WTC11 (cell line): ENCODE measurements at regions of chr6 and their contacts with region 1.

Region 1: DNA sequence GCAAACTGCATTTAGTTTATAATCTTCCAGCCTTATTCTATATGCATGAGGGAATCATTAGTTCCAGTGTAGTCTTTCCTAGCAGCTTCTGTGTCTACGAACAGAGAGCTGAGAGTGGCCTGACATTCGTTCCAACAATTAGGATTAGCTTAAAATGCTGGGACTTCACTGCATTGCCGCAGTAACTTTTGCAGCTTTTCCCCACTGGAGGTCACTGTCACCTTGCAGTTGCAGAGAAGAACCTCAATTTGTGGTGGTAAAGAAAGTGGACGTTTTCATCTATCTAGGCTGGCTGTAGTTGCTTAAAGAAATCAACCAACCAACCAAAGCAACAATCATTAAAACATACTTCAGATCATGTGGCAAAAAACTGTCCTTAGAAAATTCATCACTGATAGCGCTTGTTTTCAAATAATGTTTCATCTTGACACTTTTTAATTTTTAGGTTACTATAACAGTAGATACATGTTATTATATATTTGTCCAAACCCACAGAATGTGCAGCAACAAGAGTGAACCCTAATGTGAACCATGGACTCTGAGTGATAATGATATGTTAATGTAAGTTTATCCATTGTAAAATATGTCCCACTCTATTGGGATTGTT is 12.2 kb downstream of the MYLK4 start:
- DNase-seq: peak; percentile 66
- ATAC-seq: peak; percentile 55
- H3K4me3 Mint-ChIP-seq: no peak overlapping the region
- H3K27ac Mint-ChIP-seq: no peak overlapping the region
- H3K4me1 Mint-ChIP-seq: peaks cover 35% of the 10 kb centered on the region
- H3K27me3 Mint-ChIP-seq: no peaks in the 10 kb centered on the region
- CTCF ChIP-seq: peak; percentile 22; the same call in 1 of the 2 replicates

Region 2: GRCh38 chr6:2622671-2623070 is 115.8 kb before region 1 on chr6:
- CTCF ChIA-PET with region 1: no interaction called
- POLR2A ChIA-PET with region 1: no interaction called
- DNase-seq: no peak
- ATAC-seq: no peak
- H3K4me3 Mint-ChIP-seq: no peak overlapping the region
- H3K27ac Mint-ChIP-seq: no peak overlapping the region
- H3K4me1 Mint-ChIP-seq: no peaks in the 10 kb centered on the region
- H3K27me3 Mint-ChIP-seq: no peaks in the 10 kb centered on the region
- CTCF ChIP-seq: no peak

Region 3: GRCh38 chr6:2725999-2726567 is 12.4 kb before region 1 on chr6:
- CTCF ChIA-PET with region 1: interaction called, 17 read pairs
- POLR2A ChIA-PET with region 1: no interaction called
- DNase-seq: no peak
- ATAC-seq: peak; percentile 41; the same call in 1 of the 2 replicates
- H3K4me3 Mint-ChIP-seq: no peak overlapping the region
- H3K27ac Mint-ChIP-seq: no peak overlapping the region
- H3K4me1 Mint-ChIP-seq: peaks cover 29% of the 10 kb centered on the region
- H3K27me3 Mint-ChIP-seq: peaks cover 2% of the 10 kb centered on the region; the same call in 1 of the 2 replicates
- CTCF ChIP-seq: no peak

Region 4: DNA sequence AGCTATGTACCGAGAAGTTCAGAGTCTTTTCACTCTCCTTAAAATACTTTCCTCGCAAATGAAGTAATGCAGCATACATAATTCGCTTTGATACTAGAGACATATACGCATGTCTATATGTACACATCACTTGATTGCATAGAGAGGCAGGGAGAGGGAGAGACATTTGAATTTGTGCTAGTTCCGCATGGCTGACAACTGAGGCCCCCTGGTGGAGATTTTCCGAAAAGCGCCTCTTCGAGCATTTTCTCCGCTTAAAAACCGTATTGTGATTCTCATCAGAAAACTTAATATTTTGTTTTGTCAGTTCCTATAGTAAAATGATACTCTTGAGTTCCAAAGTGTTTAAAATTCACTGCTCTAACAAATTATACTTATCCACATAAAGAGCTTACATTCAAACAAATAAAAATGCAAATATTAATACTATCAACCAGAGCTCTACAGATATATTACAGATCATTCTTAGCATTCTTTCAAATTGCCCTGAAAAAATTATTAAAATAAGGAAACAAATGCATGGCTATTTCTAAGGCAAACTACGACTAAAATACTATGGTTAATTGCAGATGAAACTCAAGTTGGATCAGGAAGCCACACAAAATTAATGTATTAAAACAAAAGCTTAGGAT is 11.6 kb after region 1 on chr6:
- CTCF ChIA-PET with region 1: interaction called, 88 read pairs
- POLR2A ChIA-PET with region 1: interaction called, 3 read pairs
- DNase-seq: peak; percentile 62
- ATAC-seq: peak; percentile 32; the same call in 1 of the 2 replicates
- H3K4me3 Mint-ChIP-seq: no peak overlapping the region
- H3K27ac Mint-ChIP-seq: no peak overlapping the region
- H3K4me1 Mint-ChIP-seq: peaks cover 8% of the 10 kb centered on the region
- H3K27me3 Mint-ChIP-seq: no peaks in the 10 kb centered on the region
- CTCF ChIP-seq: peak; percentile 83

Region 5: DNA sequence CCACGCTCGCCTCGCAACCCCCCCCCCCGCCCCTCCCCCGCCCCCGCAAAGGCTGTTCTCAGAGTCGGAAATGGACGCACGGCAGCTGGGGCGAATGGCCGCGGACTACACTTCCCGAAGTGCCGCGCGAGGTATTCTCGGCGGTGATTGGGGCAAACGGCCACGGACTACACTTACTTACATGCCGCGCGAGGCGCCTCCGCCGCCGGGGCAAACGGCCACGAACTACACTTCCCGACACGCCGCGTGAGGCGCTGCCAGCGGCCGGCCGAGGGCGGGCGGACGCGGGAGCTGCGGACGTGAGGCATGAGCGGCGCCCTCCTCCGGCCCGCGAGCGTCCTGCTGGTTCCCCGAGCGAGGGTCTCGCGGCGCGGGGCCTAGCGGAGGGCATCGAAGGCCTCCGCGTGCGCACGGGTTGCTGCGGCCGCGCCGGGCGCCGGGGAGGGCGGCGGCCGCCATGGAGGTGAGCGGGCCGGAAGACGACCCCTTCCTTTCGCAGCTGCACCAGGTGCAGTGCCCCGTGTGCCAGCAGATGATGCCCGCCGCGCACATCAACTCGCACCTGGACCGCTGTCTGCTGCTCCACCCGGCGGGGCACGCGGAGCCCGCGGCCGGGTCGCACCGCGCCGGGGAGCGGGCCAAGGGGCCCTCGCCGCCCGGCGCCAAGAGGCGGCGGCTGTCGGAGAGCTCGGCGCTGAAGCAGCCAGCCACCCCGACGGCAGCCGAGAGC is 26.9 kb after region 1 on chr6 and contains the start of gene WRNIP1:
- CTCF ChIA-PET with region 1: interaction called, 18 read pairs
- POLR2A ChIA-PET with region 1: no interaction called
- DNase-seq: peak; percentile 96
- ATAC-seq: peak; percentile 92
- H3K4me3 Mint-ChIP-seq: peak within 1 kb of the TSS; percentile 89
- H3K27ac Mint-ChIP-seq: peak within 1 kb of the TSS; percentile 95
- H3K4me1 Mint-ChIP-seq: peaks cover 38% of the 10 kb centered on the region
- H3K27me3 Mint-ChIP-seq: no peaks in the 10 kb centered on the region
- CTCF ChIP-seq: no peak
- total RNA-seq, gene WRNIP1: 33.8 to 36.3 TPM (median 36.2 TPM) in 3 replicates

Region 6: DNA sequence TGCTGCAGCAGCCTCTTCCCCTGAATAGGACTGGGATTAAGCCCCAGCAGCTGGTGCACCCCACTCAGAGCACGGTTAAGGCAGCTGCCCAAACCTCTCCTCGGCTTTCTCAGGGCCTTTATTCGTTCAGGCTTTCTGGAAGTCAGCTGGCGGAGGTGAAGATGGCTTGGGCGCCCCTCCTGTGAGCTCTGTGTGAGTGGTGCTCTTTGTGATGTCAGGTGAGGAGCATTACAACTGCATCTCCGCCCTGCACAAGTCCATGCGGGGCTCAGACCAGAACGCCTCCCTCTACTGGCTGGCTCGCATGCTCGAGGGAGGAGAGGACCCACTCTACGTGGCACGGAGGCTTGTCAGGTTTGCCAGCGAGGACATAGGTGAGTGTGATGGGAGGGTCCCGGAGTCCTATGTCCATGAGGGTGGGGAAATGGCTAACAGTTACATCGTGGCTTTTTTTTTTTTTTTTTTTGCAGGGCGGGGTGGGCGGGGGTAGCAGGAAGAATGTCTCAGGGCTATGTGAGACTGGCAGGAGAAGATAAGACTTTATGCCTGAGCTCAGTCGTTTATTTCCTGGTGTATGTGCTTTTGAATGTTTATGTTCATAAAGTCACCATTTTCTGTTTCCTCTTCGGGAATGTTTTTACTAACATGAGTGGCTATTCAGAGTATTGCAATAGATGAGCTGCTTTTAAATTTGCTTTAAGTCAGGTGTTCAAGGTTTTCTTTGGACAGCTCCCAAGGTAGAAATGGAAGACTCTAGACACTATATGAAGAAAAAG is 44.9 kb after region 1 on chr6:
- CTCF ChIA-PET with region 1: interaction called, 10 read pairs
- POLR2A ChIA-PET with region 1: no interaction called
- DNase-seq: peak; percentile 43
- ATAC-seq: peak; percentile 96
- H3K4me3 Mint-ChIP-seq: no peak overlapping the region
- H3K27ac Mint-ChIP-seq: no peak overlapping the region
- H3K4me1 Mint-ChIP-seq: peaks cover 5% of the 10 kb centered on the region
- H3K27me3 Mint-ChIP-seq: no peaks in the 10 kb centered on the region
- CTCF ChIP-seq: no peak

Region 7: DNA sequence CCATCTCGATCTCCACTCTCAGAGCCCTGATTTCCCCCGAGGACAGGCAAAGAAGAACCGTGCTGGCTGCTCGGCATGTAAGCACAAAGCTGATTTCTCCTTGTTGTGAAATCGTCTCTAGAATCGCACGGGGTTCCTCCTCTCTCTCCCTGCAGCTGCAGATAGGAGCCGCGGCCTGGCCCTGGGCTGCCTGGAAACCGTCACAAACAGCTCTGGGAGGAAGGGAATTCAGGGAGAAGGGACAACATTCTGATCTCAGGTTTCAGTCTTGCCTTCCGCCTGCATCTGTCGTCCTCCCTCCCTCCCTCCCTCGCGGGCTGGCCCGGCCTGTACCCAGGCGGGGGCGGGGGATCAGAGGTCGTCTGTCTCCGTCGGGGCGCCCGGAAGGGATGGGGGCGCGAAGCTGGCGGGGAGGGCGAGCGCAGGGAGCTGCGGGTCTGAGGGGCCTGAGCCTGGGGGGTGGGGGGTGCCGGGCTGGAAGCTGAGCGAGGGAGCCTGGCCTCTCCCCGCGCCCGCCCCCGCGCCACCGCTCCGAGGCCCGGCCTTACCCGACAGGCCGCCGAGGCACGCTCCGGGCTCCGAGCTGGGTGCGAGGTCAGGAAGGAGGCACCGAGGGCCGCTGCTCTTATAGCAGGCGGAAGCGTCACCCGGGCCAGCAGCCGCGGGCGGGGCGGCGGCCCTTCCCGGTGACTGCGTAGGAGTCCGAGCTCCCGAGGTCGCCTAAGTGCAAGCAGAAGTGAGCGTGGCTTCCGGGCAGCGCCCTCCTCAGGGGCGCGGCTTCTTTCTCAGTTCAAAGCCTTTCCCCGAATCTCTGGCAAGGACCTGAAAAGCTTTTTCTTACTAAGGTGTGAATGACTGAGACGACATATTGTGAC is 103.0 kb after region 1 on chr6 and contains the start of gene SERPINB1:
- CTCF ChIA-PET with region 1: interaction called, 17 read pairs
- POLR2A ChIA-PET with region 1: no interaction called
- DNase-seq: peak; percentile 87
- ATAC-seq: peak; percentile 92
- H3K4me3 Mint-ChIP-seq: peak within 1 kb of the TSS; percentile 91
- H3K27ac Mint-ChIP-seq: peak within 1 kb of the TSS; percentile 100
- H3K4me1 Mint-ChIP-seq: peaks cover 37% of the 10 kb centered on the region
- H3K27me3 Mint-ChIP-seq: no peaks in the 10 kb centered on the region; the same call in 1 of the 2 replicates
- CTCF ChIP-seq: no peak
- total RNA-seq, gene SERPINB1: 14.8 to 21.1 TPM (median 16.9 TPM) in 3 replicates